H1 (cell line): ENCODE measurements at regions of chr16 and their contacts with region 1.

Region 1: GRCh38 chr16:3094289-3095027 is 4.6 kb downstream of the ZSCAN10 start:
- DNase-seq: peak in 1 of 2 experiments; percentile 75
- H3K4me3 ChIP-seq: no peak overlapping the region
- H3K27ac ChIP-seq: no peak overlapping the region
- H3K4me1 ChIP-seq: peaks cover 5 to 17% (median 9%) of the 10 kb centered on the region in 4 experiments
- H3K27me3 ChIP-seq: no peaks in the 10 kb centered on the region
- CTCF ChIP-seq: peak; percentile 12 to 80 (median 79)
- EP300 ChIP-seq: no peak
- POLR2A ChIP-seq: no peak
- RAD21 ChIP-seq: peak; percentile 73 to 81

Region 2: DNA sequence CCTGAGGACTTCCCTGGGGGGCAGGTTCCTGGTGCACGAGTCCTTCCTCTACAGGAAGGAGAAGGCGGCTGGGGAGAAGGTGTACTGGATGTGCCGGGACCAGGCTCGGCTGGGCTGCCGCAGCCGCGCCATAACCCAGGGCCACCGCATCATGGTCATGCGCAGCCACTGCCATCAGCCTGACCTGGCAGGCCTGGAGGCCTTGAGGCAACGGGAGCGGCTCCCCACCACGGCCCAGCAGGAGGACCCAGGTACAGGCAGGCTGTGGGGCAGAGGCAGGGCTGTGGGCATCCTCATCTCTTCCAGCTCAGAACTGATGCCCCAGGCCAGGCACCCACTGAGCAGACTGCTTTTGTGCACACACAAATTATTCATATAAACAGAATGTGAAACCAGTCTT is 156.3 kb before region 1 on chr16:
- CTCF ChIA-PET with region 1: no interaction called
- POLR2A ChIA-PET with region 1: no interaction called
- DNase-seq: no peak
- H3K4me3 ChIP-seq: no peak overlapping the region
- H3K27ac ChIP-seq: no peak overlapping the region
- H3K4me1 ChIP-seq: no peaks in the 10 kb centered on the region; a peak in 1 of 7 replicates
- H3K27me3 ChIP-seq: no peaks in the 10 kb centered on the region
- CTCF ChIP-seq: no peak
- EP300 ChIP-seq: no peak
- POLR2A ChIP-seq: no peak
- RAD21 ChIP-seq: no peak

Region 3: GRCh38 chr16:3065069-3065741 is 29.3 kb before region 1 on chr16 and contains the start of gene IL32:
- CTCF ChIA-PET with region 1: interaction called, 35 read pairs
- POLR2A ChIA-PET with region 1: interaction called, 140 read pairs
- DNase-seq: no peak
- H3K4me3 ChIP-seq: no peak within 1 kb of the TSS
- H3K27ac ChIP-seq: peak within 1 kb of the TSS; percentile 23; the same call in 1 of the 2 replicates
- H3K4me1 ChIP-seq: peaks cover 0 to 3% (median 1%) of the 10 kb centered on the region in 4 experiments; a peak in 2 of 7 replicates
- H3K27me3 ChIP-seq: no peaks in the 10 kb centered on the region
- CTCF ChIP-seq: no peak
- EP300 ChIP-seq: no peak
- POLR2A ChIP-seq: no peak
- RAD21 ChIP-seq: no peak
- total RNA-seq, gene IL32: 2.0 and 2.7 TPM in 2 replicates

Region 4: DNA sequence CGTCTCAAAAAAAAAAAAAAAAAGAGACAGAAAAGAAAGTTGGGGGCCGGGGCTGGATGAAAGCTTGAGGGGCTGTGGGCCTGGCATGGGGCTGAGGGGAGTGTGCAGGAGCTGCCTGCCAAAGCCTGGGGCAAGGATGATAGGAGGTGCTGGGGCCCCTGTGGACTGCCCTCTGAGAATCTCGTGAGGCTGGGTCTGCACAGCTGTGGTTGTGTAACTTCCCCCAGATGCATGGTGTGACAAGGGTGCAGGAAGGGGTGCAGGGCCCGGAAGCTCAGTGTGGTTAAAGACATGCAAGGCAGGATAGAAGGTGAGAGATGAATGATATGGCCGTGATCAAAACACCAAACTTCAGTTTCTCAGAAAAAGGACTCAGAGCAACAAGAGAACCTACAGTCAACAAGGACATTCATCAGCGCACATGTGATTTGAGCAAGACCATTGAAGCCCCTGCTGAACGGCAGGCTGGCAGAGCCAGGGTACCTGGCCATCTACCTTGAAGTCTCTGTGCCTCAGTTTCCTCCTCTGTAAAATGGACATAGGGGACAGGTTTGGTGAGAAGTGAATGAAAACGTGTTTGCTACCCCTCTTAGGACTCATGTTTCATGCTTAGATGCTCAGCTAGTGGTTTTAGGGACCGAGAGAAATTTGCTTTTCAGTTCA is 19.5 kb before region 1 on chr16:
- CTCF ChIA-PET with region 1: interaction called, 14 read pairs
- POLR2A ChIA-PET with region 1: interaction called, 86 read pairs
- DNase-seq: no peak
- H3K4me3 ChIP-seq: no peak overlapping the region
- H3K27ac ChIP-seq: no peak overlapping the region
- H3K4me1 ChIP-seq: peaks cover 0 to 2% (median 0%) of the 10 kb centered on the region in 4 experiments; a peak in 2 of 7 replicates
- H3K27me3 ChIP-seq: no peaks in the 10 kb centered on the region; a peak in 1 of 7 replicates
- CTCF ChIP-seq: no peak
- EP300 ChIP-seq: no peak
- POLR2A ChIP-seq: no peak
- RAD21 ChIP-seq: no peak

Region 5: GRCh38 chr16:3112058-3112880 is 17.8 kb after region 1 on chr16 and contains the start of gene ZNF205:
- CTCF ChIA-PET with region 1: interaction called, 293 read pairs
- POLR2A ChIA-PET with region 1: interaction called, 169 read pairs
- DNase-seq: peak in 1 of 2 experiments; percentile 92
- H3K4me3 ChIP-seq: peak within 1 kb of the TSS; percentile 85 to 93 (median 92)
- H3K27ac ChIP-seq: peak within 1 kb of the TSS; percentile 51; the same call in 1 of the 2 replicates
- H3K4me1 ChIP-seq: peaks cover 0 to 15% (median 8%) of the 10 kb centered on the region in 4 experiments; a peak in 5 of 7 replicates
- H3K27me3 ChIP-seq: no peaks in the 10 kb centered on the region
- CTCF ChIP-seq: 0 out of 4 replicates have a peak, but pooled peaks of 1 of the 3 experiments have one; percentile 14
- EP300 ChIP-seq: peak in 1 of 2 experiments; percentile 79; a peak in 1 of 3 replicates
- POLR2A ChIP-seq: no peak
- RAD21 ChIP-seq: peak; percentile 17 to 36; a peak in 2 of 4 replicates
- total RNA-seq, gene ZNF205: 17.0 and 19.1 TPM in 2 replicates